Dendritic cell treated with granulocyte-macrophage colony-stimulating factor and Interleukin-4, amounts not matched to agents 40 ng/mL and 50 ng/mL, for 4 days (primary cell): ENCODE measurements at regions of chr19 and their contacts with region 1.

Region 1: DNA sequence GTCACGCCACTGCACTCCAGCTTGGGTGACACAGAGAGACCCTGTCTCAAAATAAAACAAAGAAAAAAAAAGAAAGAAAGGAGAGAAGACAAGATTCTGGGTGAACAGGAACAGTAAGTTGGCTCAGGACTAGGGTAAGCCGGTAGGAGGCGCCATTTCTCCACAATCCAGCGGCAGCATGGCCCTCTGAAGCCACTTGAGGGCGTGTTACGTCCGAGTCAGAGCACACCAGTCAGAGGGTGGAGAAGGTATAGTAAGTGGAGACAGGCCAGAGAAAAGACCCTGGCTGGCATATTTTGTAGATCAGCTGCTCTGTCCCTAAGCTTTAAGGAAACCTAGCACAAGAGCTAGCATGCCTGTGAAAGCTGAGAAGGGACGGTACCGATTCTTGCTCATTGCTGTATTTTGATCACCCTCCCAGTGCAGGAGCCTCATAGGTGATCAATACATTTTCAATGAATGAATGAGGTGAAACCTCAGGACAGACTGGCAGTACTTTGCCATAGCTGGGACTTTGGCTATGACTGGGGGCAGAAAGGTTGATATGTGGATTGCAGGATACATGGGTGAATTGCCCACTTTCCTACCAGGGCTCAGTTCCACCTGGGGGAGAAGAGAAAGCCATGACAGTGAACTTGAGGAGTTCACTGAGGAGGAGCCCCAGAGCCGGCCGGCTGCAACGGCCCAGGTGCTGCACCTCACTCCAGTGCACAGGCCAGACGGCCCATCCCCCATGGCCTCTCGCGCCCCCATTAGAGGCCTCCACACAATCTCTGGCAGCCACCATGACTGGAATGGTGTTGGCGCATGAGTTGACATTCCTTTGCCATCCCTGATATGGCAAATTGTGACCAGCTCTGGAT is 23.5 kb downstream of the POU2F2 start:
- H3K4me3 Mint-ChIP-seq: no peak overlapping the region
- H3K27ac Mint-ChIP-seq: no peak overlapping the region
- H3K4me1 Mint-ChIP-seq: peaks cover 55% of the 10 kb centered on the region
- H3K27me3 Mint-ChIP-seq: no peaks in the 10 kb centered on the region

Region 2: GRCh38 chr19:42132851-42133528 is 24.2 kb after region 1 on chr19:
- intact Hi-C with region 1: loop called (anchors 2 kb)
- H3K4me3 Mint-ChIP-seq: peak overlapping the region; percentile 89
- H3K27ac Mint-ChIP-seq: peak overlapping the region; percentile 58
- H3K4me1 Mint-ChIP-seq: peaks cover 65% of the 10 kb centered on the region
- H3K27me3 Mint-ChIP-seq: no peaks in the 10 kb centered on the region

Region 3: GRCh38 chr19:42172261-42172660 is 63.5 kb after region 1 on chr19:
- intact Hi-C with region 1: no loop called
- H3K4me3 Mint-ChIP-seq: no peak overlapping the region
- H3K27ac Mint-ChIP-seq: no peak overlapping the region
- H3K4me1 Mint-ChIP-seq: peaks cover 18% of the 10 kb centered on the region
- H3K27me3 Mint-ChIP-seq: peaks cover 32% of the 10 kb centered on the region

Region 4: DNA sequence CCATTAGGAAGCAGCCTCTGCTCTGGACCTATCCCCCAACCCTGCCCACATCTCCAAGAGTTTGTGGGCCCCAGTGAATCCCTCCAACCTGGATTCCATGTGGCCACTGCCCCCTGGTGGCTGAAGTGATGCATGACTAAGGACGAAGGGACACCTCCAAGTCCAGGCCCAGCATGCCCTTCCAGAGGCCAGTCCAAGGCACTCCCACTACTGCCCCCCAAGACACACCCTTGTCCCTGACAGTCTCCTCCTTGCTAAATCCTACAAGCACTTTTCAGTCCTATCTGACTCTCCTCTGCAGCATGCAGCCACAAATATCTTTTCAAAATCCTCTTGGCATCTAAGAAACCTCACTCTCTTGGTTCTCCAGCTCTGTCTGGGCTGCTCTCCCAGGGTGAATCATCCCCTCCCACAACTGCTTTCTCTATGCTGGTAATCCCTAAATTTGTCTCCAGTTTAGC is 75.7 kb after region 1 on chr19:
- intact Hi-C with region 1: loop called (anchors 1 kb)
- H3K4me3 Mint-ChIP-seq: no peak overlapping the region
- H3K27ac Mint-ChIP-seq: peak overlapping the region; percentile 83
- H3K4me1 Mint-ChIP-seq: peaks cover 54% of the 10 kb centered on the region
- H3K27me3 Mint-ChIP-seq: peaks cover 7% of the 10 kb centered on the region

Region 5: DNA sequence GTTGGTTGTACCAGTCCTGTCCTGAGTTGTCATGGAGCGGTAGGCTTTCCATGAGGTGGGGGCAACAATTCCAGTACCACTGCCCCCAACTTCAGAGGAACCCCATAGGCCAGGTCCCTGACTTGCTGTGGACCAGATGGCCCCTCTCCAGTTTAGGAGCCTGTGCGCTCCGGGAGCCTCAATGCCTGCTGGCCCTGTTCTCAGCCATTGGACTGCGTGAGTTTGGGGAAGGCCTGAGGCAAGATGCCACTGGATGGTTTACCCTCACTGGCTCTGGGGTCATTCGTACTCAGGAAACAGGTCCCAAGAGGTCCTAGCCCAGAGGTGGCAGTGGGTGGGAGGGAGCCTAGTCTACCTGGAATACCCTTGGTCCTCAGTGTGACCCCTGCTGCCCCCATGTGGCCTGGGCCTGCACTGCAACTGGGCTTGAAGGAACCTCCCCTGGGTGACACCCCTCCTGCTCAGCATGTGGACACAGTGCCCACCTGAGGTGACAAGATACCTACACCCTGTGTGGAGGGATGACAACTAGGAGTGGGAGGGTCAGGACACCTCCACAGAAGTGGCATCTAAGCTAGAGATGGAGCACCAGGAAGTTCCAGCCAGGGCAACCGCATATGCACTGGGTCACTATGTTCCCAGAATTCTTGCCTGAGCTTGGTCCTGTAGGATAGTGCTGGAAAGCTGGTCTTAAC is 187.2 kb after region 1 on chr19:
- intact Hi-C with region 1: loop called (anchors 10 kb)
- H3K4me3 Mint-ChIP-seq: no peak overlapping the region
- H3K27ac Mint-ChIP-seq: no peak overlapping the region
- H3K4me1 Mint-ChIP-seq: peaks cover 9% of the 10 kb centered on the region
- H3K27me3 Mint-ChIP-seq: no peaks in the 10 kb centered on the region

Region 6: GRCh38 chr19:42325273-42325895 is 216.6 kb after region 1 on chr19 and contains the start of gene MEGF8:
- intact Hi-C with region 1: loop called (anchors 1 kb)
- H3K4me3 Mint-ChIP-seq: peak within 1 kb of the TSS; percentile 83
- H3K27ac Mint-ChIP-seq: peak within 1 kb of the TSS; percentile 81
- H3K4me1 Mint-ChIP-seq: peaks cover 28% of the 10 kb centered on the region
- H3K27me3 Mint-ChIP-seq: peaks cover 47% of the 10 kb centered on the region

Region 7: GRCh38 chr19:42401365-42402303 is 292.9 kb after region 1 on chr19:
- intact Hi-C with region 1: loop called (anchors 5 kb)
- H3K4me3 Mint-ChIP-seq: peak overlapping the region; percentile 71
- H3K27ac Mint-ChIP-seq: peak overlapping the region; percentile 51
- H3K4me1 Mint-ChIP-seq: peaks cover 41% of the 10 kb centered on the region
- H3K27me3 Mint-ChIP-seq: peaks cover 29% of the 10 kb centered on the region

Region 8: DNA sequence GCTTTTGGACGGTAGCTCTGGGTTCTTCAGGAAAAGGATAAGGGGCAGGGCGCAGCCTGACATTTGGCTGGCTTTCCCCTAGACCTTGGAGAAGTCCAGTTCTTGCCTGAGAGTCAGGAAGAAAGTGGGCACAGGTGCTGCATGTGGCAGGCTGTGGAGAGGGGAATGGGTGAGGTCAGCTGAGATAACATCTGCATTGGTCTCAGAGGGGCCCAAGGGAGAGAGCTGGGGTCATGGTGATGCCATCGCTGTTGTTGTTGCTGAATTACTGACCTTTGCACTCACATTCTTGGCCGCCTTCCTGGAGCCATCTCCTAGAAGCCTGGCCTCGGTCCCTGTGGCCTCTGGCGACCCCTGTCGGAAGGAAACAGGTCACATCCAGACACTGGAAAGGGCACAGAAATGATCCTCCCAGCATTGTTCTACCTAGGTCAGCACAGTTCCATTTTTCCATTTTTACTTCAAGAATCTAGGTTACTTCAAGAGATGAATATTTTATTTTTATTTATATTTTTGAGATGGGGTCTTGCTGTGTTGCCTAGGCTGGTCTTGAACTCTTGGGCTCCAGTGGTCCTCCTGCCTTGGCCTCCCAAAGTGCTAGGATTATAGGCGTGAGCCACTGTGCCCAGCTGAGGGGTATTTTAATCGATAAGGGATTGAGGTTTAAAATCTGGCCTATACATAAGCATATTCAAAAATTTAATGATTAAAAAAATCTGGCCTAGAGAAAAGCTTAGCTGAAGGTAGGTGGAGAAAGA is 324.9 kb after region 1 on chr19:
- intact Hi-C with region 1: loop called (anchors 10 kb)
- H3K4me3 Mint-ChIP-seq: no peak overlapping the region
- H3K27ac Mint-ChIP-seq: no peak overlapping the region
- H3K4me1 Mint-ChIP-seq: peaks cover 11% of the 10 kb centered on the region
- H3K27me3 Mint-ChIP-seq: peaks cover 11% of the 10 kb centered on the region